B cell (primary cell): ENCODE measurements at regions of chr7 and their contacts with region 1.

Region 1: DNA sequence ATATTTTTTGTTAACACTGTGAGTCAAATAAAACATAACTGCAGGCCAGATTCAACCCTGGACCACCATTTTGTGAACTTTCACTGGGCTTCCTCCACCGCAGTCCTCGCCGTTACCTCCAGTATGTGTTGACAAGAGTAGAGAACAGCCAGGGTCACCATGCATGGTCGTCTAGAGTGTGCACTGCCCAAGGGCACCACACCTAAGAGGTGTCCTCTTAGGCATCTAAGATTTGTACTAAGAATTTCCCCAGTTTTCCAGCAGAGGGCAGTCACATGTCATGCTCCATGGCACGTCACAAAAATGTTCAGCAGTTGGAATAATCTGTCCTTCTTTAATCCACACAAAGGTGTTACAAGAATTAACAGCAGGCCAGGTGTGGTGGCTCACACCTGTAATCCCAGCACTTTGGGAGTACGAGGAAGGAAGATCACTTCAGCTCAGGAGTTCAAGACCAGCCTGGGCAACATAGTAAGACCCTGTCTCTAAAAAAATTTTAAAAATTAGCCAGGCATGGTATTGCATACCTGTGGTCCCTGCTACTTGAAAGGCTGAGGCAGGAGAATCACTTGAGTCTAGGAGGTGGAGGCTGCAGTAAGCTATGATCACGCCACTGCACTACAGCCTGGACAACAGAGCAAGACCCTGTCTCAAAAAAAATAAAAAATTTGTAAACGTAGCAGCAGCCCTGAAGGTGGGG is 71.2 kb upstream of the FOXK1 start:
- DNase-seq: peak; percentile 75
- ATAC-seq: peak; percentile 83
- H3K4me3 ChIP-seq: no peak overlapping the region
- H3K4me3 Mint-ChIP-seq: no peak overlapping the region
- H3K27ac ChIP-seq: no peak overlapping the region
- H3K27ac Mint-ChIP-seq: no peak overlapping the region
- H3K4me1 ChIP-seq: peaks cover 10 to 13% of the 10 kb centered on the region in 2 donors
- H3K4me1 Mint-ChIP-seq: peaks cover 12% of the 10 kb centered on the region
- H3K27me3 ChIP-seq: peaks cover 0 to 3% (median 0%) of the 10 kb centered on the region in 4 experiments
- H3K27me3 Mint-ChIP-seq: peaks cover 26% of the 10 kb centered on the region
- CTCF ChIP-seq: peak; percentile 90

Region 2: GRCh38 chr7:4042402-4043045 is 568.4 kb before region 1 on chr7:
- CTCF ChIA-PET with region 1: no interaction called
- POLR2A ChIA-PET with region 1: no interaction called
- intact Hi-C with region 1: no loop called
- DNase-seq: no peak
- ATAC-seq: no peak
- H3K4me3 ChIP-seq: no peak overlapping the region
- H3K4me3 Mint-ChIP-seq: no peak overlapping the region
- H3K27ac ChIP-seq: no peak overlapping the region
- H3K27ac Mint-ChIP-seq: no peak overlapping the region
- H3K4me1 ChIP-seq: peaks cover 0 to 12% of the 10 kb centered on the region in 2 donors
- H3K4me1 Mint-ChIP-seq: peaks cover 5% of the 10 kb centered on the region
- H3K27me3 ChIP-seq: no peaks in the 10 kb centered on the region
- H3K27me3 Mint-ChIP-seq: peaks cover 6% of the 10 kb centered on the region
- CTCF ChIP-seq: no peak

Region 3: DNA sequence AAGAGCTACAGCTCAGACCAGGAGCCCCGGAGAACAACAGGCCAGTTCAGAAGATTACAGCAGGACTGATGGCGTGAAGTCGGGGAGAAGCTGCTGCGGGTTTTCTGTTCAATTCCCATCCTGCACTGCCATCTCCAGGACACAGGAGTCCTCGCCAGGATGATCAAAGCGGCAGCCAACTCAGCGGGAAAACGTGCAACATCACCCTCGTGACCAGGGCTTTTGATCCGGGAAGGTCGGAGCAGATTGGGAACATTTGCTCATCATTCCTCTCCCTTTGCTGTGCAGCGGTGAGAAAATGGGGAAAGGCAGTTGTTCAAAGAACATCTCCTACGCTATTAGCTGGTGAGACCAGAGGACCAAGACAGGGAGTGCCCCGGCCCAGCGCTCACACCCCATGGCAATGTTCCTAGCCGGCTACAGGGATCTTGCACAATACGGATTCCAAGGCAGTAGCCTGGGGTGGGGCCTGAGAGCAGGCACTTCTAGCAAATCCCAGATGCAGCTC is 20.8 kb after region 1 on chr7:
- CTCF ChIA-PET with region 1: no interaction called
- POLR2A ChIA-PET with region 1: no interaction called
- intact Hi-C with region 1: no loop called
- DNase-seq: no peak
- ATAC-seq: no peak
- H3K4me3 ChIP-seq: no peak overlapping the region
- H3K4me3 Mint-ChIP-seq: no peak overlapping the region
- H3K27ac ChIP-seq: no peak overlapping the region
- H3K27ac Mint-ChIP-seq: no peak overlapping the region
- H3K4me1 ChIP-seq: no peaks in the 10 kb centered on the region
- H3K4me1 Mint-ChIP-seq: no peaks in the 10 kb centered on the region
- H3K27me3 ChIP-seq: no peaks in the 10 kb centered on the region
- H3K27me3 Mint-ChIP-seq: peaks cover 14% of the 10 kb centered on the region
- CTCF ChIP-seq: no peak

Region 4: DNA sequence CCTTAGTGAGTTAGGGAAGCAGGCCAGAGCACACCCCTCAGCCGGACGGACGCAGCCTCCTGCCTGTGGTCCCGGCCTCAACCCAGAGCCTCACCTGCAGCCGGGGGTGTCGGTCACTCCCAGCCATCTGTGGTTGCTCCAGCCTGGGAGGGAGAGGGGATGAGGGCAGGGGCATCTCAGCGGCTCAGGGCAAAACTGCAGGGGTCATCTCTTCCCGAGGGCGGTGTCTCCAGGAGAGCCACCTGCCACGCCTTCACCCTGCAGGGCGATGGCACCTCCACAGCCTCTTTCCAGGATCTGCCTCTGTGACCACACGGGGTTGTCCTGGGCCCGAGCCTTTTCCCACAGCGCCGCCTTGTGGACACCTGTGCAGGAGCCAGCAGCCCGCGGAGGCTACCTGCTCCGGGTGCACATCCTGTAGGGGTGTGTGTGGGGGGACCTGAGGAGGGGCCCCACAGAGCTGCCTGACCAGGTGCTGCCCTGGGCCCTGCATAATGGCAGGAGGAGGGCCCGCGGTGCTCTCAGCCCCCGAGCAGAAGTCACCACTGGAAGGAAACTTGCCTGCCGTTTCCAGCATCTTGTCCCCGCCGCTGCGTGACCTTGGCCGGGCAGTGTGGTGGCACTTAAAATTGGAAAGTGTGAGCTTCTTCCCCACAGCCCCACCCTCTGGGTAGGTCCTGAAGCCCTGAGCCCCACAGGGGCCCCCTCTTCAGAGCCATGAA is 143.0 kb after region 1 on chr7:
- CTCF ChIA-PET with region 1: interaction called, 21 read pairs
- POLR2A ChIA-PET with region 1: no interaction called
- intact Hi-C with region 1: no loop called
- DNase-seq: peak; percentile 81
- ATAC-seq: peak; percentile 91
- H3K4me3 ChIP-seq: no peak overlapping the region
- H3K4me3 Mint-ChIP-seq: no peak overlapping the region
- H3K27ac ChIP-seq: no peak overlapping the region
- H3K27ac Mint-ChIP-seq: no peak overlapping the region
- H3K4me1 ChIP-seq: peaks cover 0 to 11% of the 10 kb centered on the region in 2 donors
- H3K4me1 Mint-ChIP-seq: peaks cover 15% of the 10 kb centered on the region
- H3K27me3 ChIP-seq: no peaks in the 10 kb centered on the region
- H3K27me3 Mint-ChIP-seq: no peaks in the 10 kb centered on the region
- CTCF ChIP-seq: peak; percentile 86